ENCODE measurements at regions of chr2 and their contacts with region 1.

Region 1: GRCh38 chr2:72150157-72150865 is 2.6 kb upstream of the CYP26B1 start:
- DNase-seq: peak; percentile 88
- H3K4me3 ChIP-seq: peak overlapping the region in 3 of 4 donors; percentile 43 to 55 (median 44)
- H3K27ac ChIP-seq: no peak overlapping the region
- H3K4me1 ChIP-seq: peaks cover 0 to 48% (median 44%) of the 10 kb centered on the region in 4 donors
- H3K27me3 ChIP-seq: peaks cover 38 to 85% (median 41%) of the 10 kb centered on the region in 3 donors
- CTCF ChIP-seq: peak; percentile 81 to 90 (median 84)
- EP300 ChIP-seq: no peak
- POLR2A ChIP-seq: no peak

Region 2: GRCh38 chr2:71226965-71227560 is 923.2 kb before region 1 on chr2 and contains the start of gene PAIP2B:
- intact Hi-C with region 1: loop called (anchors 5 kb)
- DNase-seq: peak; percentile 100
- H3K4me3 ChIP-seq: peak within 1 kb of the TSS; percentile 77 to 97 (median 94)
- H3K27ac ChIP-seq: peak within 1 kb of the TSS; percentile 89 to 96 (median 94)
- H3K4me1 ChIP-seq: peaks cover 0 to 17% (median 6%) of the 10 kb centered on the region in 4 donors
- H3K27me3 ChIP-seq: no peaks in the 10 kb centered on the region
- CTCF ChIP-seq: no peak
- EP300 ChIP-seq: no peak
- POLR2A ChIP-seq: peak; percentile 66 to 83
- total RNA-seq, gene PAIP2B: 8.0 to 13.2 (median 12.4) TPM

Region 3: DNA sequence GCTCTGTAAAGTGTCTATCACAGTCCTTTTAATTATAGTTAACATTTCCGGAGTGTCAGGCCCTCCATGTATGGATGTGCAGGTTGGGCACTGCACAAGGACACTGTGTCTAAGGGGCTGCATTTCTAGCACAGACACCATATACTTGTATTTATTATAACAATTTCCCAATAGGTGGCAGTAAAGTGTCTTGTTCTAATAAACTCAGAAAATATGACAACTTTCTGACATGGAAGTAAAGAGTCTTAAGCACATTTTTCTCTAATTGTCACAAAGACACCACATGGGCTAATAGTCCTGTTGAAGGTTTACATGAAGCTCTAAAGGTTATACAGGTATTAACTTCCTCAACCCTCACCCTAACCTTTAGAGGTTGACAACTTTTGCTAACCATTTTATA is 540.4 kb before region 1 on chr2:
- intact Hi-C with region 1: loop called (anchors 5 kb)
- DNase-seq: peak; percentile 32
- H3K4me3 ChIP-seq: no peak overlapping the region
- H3K27ac ChIP-seq: no peak overlapping the region
- H3K4me1 ChIP-seq: peaks cover 0 to 13% (median 13%) of the 10 kb centered on the region in 4 donors
- H3K27me3 ChIP-seq: no peaks in the 10 kb centered on the region
- CTCF ChIP-seq: peak in 2 of 4 experiments; percentile 18 to 22
- EP300 ChIP-seq: no peak
- POLR2A ChIP-seq: no peak

Region 4: DNA sequence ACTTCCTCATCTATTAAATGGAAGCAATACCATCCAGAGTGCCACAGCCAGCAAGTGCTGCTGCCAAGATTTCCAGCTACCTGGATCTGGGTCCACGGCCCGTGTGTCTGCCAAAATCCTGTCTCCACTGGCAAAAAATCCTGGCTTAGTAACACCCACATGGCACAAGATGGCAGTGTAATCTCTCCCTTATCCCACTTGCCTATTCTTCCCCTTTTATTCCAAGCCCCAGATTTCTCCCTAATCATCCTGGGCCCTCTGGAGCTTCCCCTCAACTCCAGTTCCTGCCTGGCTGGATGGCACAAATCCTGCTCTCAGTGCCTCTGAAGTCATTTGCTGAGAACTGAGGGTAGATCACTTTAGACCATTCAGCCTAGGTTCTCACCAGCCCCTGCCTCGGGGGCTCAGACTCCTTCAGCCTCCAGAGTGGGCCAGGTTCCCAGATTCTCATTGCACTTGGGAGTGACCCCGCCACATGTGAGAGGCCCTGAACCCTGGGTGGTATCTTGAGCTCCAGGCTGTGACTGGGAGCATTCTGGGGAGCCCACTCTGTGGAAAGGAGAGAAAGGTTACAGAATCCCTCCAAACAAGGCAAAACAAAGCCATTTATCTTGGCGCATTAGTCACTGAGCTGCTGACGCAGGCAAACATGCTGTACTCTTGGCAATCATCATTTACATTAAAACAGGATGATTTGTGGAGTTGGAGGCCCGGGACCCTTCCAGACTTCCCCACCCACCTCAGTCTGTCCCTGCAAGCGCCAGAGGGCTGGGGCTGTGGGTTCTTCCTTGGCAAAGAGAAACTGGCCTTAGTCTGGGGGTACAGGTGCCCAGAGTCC is 371.2 kb before region 1 on chr2:
- intact Hi-C with region 1: no loop called
- DNase-seq: no peak
- H3K4me3 ChIP-seq: no peak overlapping the region
- H3K27ac ChIP-seq: peak overlapping the region in 1 of 4 donors; percentile 0
- H3K4me1 ChIP-seq: peaks cover 0 to 42% (median 12%) of the 10 kb centered on the region in 4 donors
- H3K27me3 ChIP-seq: no peaks in the 10 kb centered on the region
- CTCF ChIP-seq: no peak
- EP300 ChIP-seq: no peak
- POLR2A ChIP-seq: no peak

Region 5: GRCh38 chr2:71798266-71799012 is 351.9 kb before region 1 on chr2:
- intact Hi-C with region 1: loop called (anchors 5 kb)
- DNase-seq: peak; percentile 57
- H3K4me3 ChIP-seq: no peak overlapping the region
- H3K27ac ChIP-seq: no peak overlapping the region
- H3K4me1 ChIP-seq: peaks cover 0 to 3% (median 0%) of the 10 kb centered on the region in 4 donors
- H3K27me3 ChIP-seq: no peaks in the 10 kb centered on the region
- CTCF ChIP-seq: peak in 3 of 4 experiments; percentile 40 to 63 (median 45)
- EP300 ChIP-seq: no peak
- POLR2A ChIP-seq: no peak

Region 6: GRCh38 chr2:71995067-71995665 is 155.1 kb before region 1 on chr2:
- intact Hi-C with region 1: no loop called
- DNase-seq: no peak
- H3K4me3 ChIP-seq: no peak overlapping the region
- H3K27ac ChIP-seq: no peak overlapping the region
- H3K4me1 ChIP-seq: no peaks in the 10 kb centered on the region
- H3K27me3 ChIP-seq: no peaks in the 10 kb centered on the region
- CTCF ChIP-seq: peak in 3 of 4 experiments; percentile 34 to 50 (median 42)
- EP300 ChIP-seq: no peak
- POLR2A ChIP-seq: no peak

Region 7: GRCh38 chr2:72457801-72458516 is 307.6 kb after region 1 on chr2:
- intact Hi-C with region 1: no loop called
- DNase-seq: no peak
- H3K4me3 ChIP-seq: no peak overlapping the region
- H3K27ac ChIP-seq: no peak overlapping the region
- H3K4me1 ChIP-seq: no peaks in the 10 kb centered on the region
- H3K27me3 ChIP-seq: no peaks in the 10 kb centered on the region
- CTCF ChIP-seq: no peak
- EP300 ChIP-seq: no peak
- POLR2A ChIP-seq: no peak

Region 8: DNA sequence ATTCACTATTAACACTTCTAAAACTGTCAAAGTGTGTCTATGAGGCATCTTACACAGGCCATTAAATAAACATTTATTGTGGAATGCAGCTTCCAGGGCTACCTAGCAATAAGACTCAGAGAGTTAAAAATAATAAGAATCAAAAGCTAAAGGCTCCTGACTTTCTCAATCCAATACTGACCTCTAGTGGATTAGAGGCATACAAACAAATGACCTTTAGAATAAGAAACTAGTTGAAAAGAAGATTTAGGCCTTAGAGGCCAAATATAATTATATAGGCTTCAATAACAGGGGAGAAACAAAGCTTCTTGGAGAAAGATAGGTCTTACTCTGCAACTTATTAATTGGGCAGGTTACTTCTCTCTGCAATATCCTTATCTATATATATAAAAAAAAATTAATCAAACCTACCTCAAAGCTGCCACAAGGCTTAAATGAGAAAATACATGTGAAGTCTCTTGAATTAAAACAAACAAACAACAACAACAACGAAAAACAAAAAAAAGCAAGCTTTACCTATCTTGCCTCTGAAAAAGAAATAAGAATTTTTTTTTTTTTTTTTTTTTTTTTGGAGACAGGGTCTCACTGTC is 429.4 kb after region 1 on chr2:
- intact Hi-C with region 1: loop called (anchors 10 kb)
- DNase-seq: no peak
- H3K4me3 ChIP-seq: no peak overlapping the region
- H3K27ac ChIP-seq: no peak overlapping the region
- H3K4me1 ChIP-seq: peaks cover 0 to 14% (median 0%) of the 10 kb centered on the region in 4 donors
- H3K27me3 ChIP-seq: no peaks in the 10 kb centered on the region
- CTCF ChIP-seq: peak; percentile 21 to 52 (median 40)
- EP300 ChIP-seq: no peak
- POLR2A ChIP-seq: no peak

Measured in sigmoid colon (tissue), 7 donors.